A673 (cell line): ENCODE measurements at regions of chr1 and their contacts with region 1.

Region 1: DNA sequence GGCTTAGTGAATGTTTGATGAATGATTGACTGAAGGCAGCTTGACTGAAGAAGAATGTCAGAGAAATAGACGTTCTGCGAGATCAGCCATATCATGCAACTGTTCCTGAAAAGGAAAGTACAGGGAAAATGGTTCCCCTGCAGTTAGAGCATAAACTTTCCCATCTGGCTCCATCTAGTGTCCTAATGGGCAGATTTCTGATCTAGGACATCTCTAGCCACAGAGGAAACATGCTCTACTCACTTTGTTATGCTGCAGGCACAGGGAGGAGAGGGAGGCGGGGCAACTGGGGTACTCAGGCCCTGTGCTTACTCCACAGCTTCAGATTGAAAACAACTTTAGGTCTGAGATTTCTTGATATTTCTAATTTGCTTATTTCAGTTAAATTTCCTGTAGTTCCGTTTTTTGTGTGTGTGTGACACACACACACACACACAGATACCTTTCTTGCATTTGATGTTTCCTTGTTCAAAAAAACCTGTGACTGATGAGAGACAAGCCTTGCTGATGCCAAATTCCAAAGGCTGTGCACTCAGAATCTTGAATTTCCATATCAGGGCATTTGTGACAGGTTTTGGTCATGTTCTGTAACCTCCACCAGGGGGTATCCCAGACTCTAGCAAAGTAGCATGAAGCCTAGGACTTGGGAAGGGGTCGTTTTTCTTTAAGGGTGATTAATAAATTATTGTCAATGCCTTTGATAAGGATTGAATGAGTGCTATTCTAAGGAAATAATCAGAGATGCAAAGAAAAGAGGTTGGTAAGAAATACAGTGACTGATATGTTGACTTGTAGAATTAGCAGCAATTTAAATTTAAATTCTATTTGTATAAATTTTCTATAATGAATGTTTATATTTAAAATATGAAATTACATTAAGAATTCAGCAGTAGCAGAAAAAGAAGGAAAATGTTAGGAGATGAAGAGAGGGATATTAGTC is 139.7 kb upstream of the BEND5 start:
- DNase-seq: peak; percentile 84
- H3K4me3 ChIP-seq: no peak overlapping the region
- H3K27ac ChIP-seq: peak overlapping the region; percentile 28
- H3K4me1 ChIP-seq: peaks cover 9% of the 10 kb centered on the region
- H3K27me3 ChIP-seq: no peaks in the 10 kb centered on the region
- CTCF ChIP-seq: peak; percentile 71

Region 2: DNA sequence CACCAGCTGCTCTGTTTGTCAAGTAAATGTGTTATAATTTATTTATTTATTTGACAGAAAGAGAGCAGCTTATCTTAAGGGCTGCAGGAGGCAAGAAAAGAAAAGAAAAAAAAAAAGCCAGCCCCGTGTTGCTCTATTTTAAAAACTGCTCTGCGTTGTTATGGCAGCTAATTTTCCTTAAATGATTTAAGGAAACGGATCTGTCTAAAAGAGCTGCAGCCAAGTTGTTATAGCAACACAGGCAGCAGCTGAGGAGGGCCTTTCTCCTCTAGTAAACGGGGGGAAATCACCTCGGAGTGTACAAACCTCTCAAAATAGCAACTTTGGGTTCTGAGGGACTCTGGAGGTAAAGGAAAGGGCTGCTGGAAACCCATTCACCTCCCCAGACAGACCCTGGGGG is 288.9 kb before region 1 on chr1:
- CTCF ChIA-PET with region 1: no interaction called
- POLR2A ChIA-PET with region 1: no interaction called
- intact Hi-C with region 1: no loop called
- DNase-seq: no peak
- H3K4me3 ChIP-seq: no peak overlapping the region
- H3K27ac ChIP-seq: no peak overlapping the region
- H3K4me1 ChIP-seq: no peaks in the 10 kb centered on the region
- H3K27me3 ChIP-seq: peaks cover 5% of the 10 kb centered on the region
- CTCF ChIP-seq: no peak

Region 3: GRCh38 chr1:48999321-48999720 is 82.9 kb after region 1 on chr1:
- CTCF ChIA-PET with region 1: no interaction called
- POLR2A ChIA-PET with region 1: no interaction called
- intact Hi-C with region 1: loop called (anchors 2 kb)
- DNase-seq: no peak
- H3K4me3 ChIP-seq: no peak overlapping the region
- H3K27ac ChIP-seq: no peak overlapping the region
- H3K4me1 ChIP-seq: peaks cover 14% of the 10 kb centered on the region
- H3K27me3 ChIP-seq: no peaks in the 10 kb centered on the region
- CTCF ChIP-seq: no peak

Region 4: DNA sequence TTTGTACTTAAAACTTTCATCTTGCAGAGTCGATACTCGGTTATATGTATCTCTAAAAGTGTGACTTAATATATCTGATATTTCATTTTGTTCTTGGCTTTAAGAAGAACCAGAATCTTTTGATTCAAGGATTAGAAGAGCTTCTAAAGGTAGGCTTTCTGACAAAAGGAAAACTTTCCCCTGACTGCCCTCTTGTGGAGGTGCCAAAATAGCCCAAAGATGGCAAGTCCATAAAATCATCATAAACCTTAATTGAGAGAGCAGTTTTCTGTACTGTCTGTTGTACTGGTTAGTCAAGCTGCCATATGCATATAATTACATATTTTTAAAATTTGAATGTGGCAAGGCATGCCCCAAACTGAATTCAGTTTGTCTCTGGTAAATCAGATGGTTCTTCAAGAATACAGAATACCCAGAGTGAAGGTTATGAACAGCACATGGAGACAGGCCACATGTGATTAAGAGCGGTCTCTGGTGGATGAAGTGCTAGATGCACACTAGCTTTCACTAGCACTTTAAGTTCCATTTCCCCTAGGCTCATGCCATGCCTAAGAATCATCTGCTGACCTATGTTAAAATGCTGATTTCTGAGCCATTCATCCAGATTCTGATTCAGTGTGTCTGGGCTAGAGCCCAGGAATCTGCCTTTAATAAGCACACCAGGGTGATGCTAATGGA is 1164.6 kb after region 1 on chr1:
- CTCF ChIA-PET with region 1: no interaction called
- POLR2A ChIA-PET with region 1: no interaction called
- intact Hi-C with region 1: loop called (anchors 10 kb)
- DNase-seq: peak; percentile 45
- H3K4me3 ChIP-seq: no peak overlapping the region
- H3K27ac ChIP-seq: no peak overlapping the region
- H3K4me1 ChIP-seq: no peaks in the 10 kb centered on the region
- H3K27me3 ChIP-seq: no peaks in the 10 kb centered on the region
- CTCF ChIP-seq: peak; percentile 65

Region 5: DNA sequence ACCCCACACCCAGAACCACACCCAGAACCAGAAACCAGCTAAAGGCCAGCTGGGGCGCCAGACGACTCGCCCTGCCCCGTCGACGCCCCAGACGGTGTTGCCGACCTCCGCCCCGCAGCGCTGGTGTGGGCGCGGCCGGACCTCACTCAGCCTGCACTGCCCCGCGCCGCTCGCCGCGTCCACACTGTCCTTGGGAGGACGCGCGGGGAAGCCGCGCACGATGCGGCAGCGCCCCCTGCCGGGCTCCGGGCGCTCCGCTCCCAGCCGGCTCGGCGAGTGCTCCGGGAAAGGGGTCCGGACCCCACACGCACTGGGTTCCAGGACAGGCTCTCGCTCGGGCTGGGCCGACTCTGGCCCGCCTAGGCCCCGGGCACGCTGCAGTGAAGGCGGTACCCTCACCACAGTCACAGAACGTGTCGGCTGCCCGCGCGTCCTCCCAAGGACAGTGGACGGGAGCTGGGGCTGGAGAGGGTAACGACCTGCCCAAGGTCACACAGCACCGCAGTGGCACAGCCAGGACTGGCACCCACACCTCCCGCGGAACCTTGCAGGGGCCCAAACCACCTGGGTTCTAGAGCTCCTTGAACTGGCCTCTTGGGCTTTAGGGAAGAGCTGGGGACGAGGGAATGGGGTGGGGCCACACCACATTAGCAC is 1416.7 kb after region 1 on chr1:
- CTCF ChIA-PET with region 1: no interaction called
- POLR2A ChIA-PET with region 1: no interaction called
- intact Hi-C with region 1: loop called (anchors 2 kb)
- DNase-seq: peak; percentile 68
- H3K4me3 ChIP-seq: peak overlapping the region; percentile 62
- H3K27ac ChIP-seq: peak overlapping the region; percentile 53
- H3K4me1 ChIP-seq: no peaks in the 10 kb centered on the region
- H3K27me3 ChIP-seq: no peaks in the 10 kb centered on the region
- CTCF ChIP-seq: peak; percentile 81